ENCODE measurements at regions of chr1 and their contacts with region 1.

Region 1: DNA sequence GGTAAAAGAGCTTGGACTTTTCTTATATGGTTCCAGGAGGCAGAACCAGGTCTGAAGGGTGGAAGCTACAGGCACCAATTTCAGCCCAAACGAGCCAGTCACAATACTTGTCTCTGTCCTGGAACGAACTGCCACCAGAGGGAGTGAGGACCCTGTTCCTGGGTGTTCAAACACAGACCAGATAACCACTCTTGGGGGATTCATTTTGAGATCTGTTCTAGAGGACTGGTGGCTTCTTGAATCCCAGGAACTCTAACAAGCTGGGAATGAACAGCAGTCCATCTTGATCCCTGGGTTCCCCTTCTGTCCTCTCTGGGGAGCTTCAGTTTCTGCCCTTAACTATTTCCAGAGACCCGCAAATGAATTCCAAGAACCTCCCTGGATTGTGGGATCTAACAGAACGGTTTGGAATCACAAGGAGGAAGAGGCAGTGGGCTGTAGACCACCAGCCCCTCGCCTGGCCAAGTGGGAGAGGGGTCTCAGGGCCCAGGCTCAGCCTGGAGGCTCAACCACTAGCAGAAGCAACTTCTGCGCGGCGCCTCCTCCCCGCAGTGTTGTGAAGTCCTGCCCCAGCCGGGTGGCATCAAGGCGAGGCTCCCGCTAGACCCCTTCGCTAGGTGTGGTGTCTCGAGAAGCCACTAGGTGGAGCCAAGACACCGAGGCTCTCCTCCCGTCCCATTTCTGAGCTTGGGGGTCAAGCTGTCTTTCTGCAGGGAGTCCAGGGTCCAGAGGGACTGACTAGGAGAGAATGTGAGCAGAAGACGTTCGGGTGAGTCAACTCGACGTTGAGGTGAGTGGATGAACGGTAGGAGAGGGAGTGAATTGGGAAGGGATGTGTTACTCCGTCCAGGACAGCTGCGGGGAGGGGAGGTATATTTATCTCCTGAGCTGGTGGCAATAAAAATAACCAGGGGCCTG is 12.1 kb upstream of the NES start:
- DNase-seq: peak; percentile 62 to 88 (median 71)
- ATAC-seq: peak; percentile 99
- H3K4me3 ChIP-seq: no peak overlapping the region
- H3K4me3 Mint-ChIP-seq: no peak overlapping the region
- H3K27ac ChIP-seq: no peak overlapping the region
- H3K27ac Mint-ChIP-seq: no peak overlapping the region
- H3K4me1 ChIP-seq: peaks cover 28% of the 10 kb centered on the region
- H3K4me1 Mint-ChIP-seq: peaks cover 31% of the 10 kb centered on the region
- H3K27me3 ChIP-seq: peaks cover 49 to 57% of the 10 kb centered on the region in 2 experiments
- H3K27me3 Mint-ChIP-seq: peaks cover 61% of the 10 kb centered on the region
- CTCF ChIP-seq: peak; percentile 95

Region 2: DNA sequence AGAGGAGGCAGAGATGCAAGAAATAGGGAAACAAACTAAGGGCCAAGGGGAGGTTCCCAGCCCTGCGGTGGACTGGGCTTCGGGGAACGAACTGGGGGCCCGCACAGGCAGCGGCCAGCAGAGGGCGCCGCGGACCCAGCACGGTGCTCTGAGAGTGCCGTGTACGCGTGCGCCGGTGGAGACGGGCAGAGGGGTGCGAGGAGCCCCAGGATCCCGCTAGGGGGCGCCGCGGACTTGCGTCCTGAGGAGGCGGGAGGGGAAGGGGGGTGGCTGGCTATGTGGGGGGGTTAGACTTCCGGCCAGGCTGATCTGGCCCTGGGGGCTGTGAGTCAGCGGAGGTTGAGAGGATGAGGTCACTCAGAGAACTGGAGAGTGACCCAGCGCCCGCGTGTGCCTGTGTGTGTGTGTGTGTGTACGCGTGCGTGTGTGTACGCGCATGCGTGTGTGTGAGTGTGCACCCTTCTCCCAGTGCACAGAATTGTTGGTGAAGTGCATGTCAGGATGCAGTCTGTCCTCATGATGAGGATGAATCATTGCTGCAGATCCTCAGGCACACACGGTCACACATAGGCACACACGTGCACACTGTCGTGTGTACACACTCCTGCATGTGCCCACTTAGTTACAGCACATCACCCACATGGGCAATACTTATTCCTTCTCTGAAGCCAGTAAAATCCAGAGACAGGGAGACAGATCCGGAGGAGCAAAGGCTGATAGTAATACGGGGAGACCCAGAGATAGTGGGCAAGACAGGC is 29.1 kb before region 1 on chr1:
- CTCF ChIA-PET with region 1: interaction called, 11 read pairs
- POLR2A ChIA-PET with region 1: no interaction called
- intact Hi-C with region 1: no loop called
- DNase-seq: peak; percentile 79 to 96 (median 88)
- ATAC-seq: peak; percentile 87
- H3K4me3 ChIP-seq: no peak overlapping the region
- H3K4me3 Mint-ChIP-seq: peak overlapping the region; percentile 54
- H3K27ac ChIP-seq: no peak overlapping the region
- H3K27ac Mint-ChIP-seq: peak overlapping the region; percentile 42
- H3K4me1 ChIP-seq: peaks cover 60% of the 10 kb centered on the region
- H3K4me1 Mint-ChIP-seq: peaks cover 60% of the 10 kb centered on the region
- H3K27me3 ChIP-seq: peaks cover 20 to 22% of the 10 kb centered on the region in 2 experiments
- H3K27me3 Mint-ChIP-seq: peaks cover 30% of the 10 kb centered on the region
- CTCF ChIP-seq: peak; percentile 91

Region 3: GRCh38 chr1:156700736-156701531 is 11.6 kb after region 1 on chr1:
- CTCF ChIA-PET with region 1: interaction called, 51 read pairs
- POLR2A ChIA-PET with region 1: interaction called, 14 read pairs
- intact Hi-C with region 1: loop called (anchors 1 to 2 kb)
- DNase-seq: no peak
- ATAC-seq: peak; percentile 54
- H3K4me3 ChIP-seq: no peak overlapping the region
- H3K4me3 Mint-ChIP-seq: no peak overlapping the region
- H3K27ac ChIP-seq: no peak overlapping the region
- H3K27ac Mint-ChIP-seq: no peak overlapping the region
- H3K4me1 ChIP-seq: peaks cover 18% of the 10 kb centered on the region
- H3K4me1 Mint-ChIP-seq: peaks cover 18% of the 10 kb centered on the region
- H3K27me3 ChIP-seq: peaks cover 24 to 26% of the 10 kb centered on the region in 2 experiments
- H3K27me3 Mint-ChIP-seq: peaks cover 78% of the 10 kb centered on the region
- CTCF ChIP-seq: no peak

Region 4: GRCh38 chr1:156705918-156706656 is 16.8 kb after region 1 on chr1:
- CTCF ChIA-PET with region 1: interaction called, 51 read pairs
- POLR2A ChIA-PET with region 1: interaction called, 14 read pairs
- intact Hi-C with region 1: loop called (anchors 1 to 2 kb)
- DNase-seq: peak; percentile 60 to 86 (median 68)
- ATAC-seq: peak; percentile 75
- H3K4me3 ChIP-seq: peak overlapping the region; percentile 77
- H3K4me3 Mint-ChIP-seq: peak overlapping the region; percentile 97
- H3K27ac ChIP-seq: peak overlapping the region; percentile 53 to 66
- H3K27ac Mint-ChIP-seq: peak overlapping the region; percentile 77
- H3K4me1 ChIP-seq: peaks cover 35% of the 10 kb centered on the region
- H3K4me1 Mint-ChIP-seq: peaks cover 32% of the 10 kb centered on the region
- H3K27me3 ChIP-seq: peaks cover 22 to 24% of the 10 kb centered on the region in 2 experiments
- H3K27me3 Mint-ChIP-seq: peaks cover 39% of the 10 kb centered on the region
- CTCF ChIP-seq: peak; percentile 91

Region 5: DNA sequence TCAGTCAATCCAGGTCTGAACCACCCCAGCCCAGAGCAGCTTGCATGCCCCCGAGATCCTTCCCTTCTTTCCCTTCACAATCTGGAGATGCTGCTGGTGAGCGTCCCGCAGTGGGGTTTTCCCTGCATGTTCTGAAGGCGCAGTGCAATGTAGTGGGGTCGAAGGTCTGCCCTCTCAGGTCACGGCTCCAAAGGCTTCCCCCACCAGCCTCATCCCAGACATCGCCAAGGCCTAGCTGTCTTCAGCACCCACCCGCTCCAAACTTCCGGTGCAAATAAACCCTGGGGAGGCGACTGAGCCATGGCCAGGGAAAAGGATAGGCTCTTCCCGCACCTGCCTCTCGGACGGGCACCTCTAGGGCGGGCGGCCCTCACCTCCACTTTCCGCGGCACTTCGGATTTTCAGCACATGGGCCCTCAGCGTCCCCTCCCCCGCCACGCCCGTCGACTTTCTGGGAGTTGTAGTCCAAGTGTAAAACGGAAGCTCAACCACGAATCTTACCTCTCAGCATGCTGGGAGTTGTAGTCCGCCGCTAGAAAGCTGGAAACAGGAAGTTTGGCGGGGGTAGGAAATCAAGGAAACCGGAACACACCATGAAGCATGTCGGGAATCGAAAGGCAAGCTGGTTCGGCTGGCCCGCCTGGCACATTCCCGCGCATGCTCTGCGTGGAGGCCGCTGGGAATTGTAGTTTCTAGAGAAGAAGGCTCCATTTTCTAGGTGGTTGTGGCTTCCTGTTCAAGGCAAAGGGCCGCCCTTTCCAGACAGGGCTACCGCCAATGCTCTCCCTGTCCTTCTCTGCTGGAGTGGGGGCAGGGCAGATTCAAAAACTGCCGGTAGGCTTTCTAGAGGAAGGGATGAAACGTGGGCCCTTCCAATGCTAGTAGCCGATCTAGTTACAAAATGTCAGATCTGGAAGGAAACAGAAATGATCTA is 51.7 kb after region 1 on chr1 and contains the start of gene MRPL24:
- CTCF ChIA-PET with region 1: interaction called, 12 read pairs
- POLR2A ChIA-PET with region 1: interaction called, 3 read pairs
- intact Hi-C with region 1: no loop called
- DNase-seq: peak; percentile 92 to 100 (median 96)
- ATAC-seq: peak; percentile 89
- H3K4me3 ChIP-seq: peak within 1 kb of the TSS; percentile 74
- H3K4me3 Mint-ChIP-seq: peak within 1 kb of the TSS; percentile 94
- H3K27ac ChIP-seq: peak within 1 kb of the TSS; percentile 82 to 86
- H3K27ac Mint-ChIP-seq: peak within 1 kb of the TSS; percentile 89
- H3K4me1 ChIP-seq: peaks cover 28% of the 10 kb centered on the region
- H3K4me1 Mint-ChIP-seq: peaks cover 40% of the 10 kb centered on the region
- H3K27me3 ChIP-seq: no peaks in the 10 kb centered on the region
- H3K27me3 Mint-ChIP-seq: no peaks in the 10 kb centered on the region
- CTCF ChIP-seq: no peak
- total RNA-seq, gene MRPL24: 11.7 to 11.9 TPM

Region 6: DNA sequence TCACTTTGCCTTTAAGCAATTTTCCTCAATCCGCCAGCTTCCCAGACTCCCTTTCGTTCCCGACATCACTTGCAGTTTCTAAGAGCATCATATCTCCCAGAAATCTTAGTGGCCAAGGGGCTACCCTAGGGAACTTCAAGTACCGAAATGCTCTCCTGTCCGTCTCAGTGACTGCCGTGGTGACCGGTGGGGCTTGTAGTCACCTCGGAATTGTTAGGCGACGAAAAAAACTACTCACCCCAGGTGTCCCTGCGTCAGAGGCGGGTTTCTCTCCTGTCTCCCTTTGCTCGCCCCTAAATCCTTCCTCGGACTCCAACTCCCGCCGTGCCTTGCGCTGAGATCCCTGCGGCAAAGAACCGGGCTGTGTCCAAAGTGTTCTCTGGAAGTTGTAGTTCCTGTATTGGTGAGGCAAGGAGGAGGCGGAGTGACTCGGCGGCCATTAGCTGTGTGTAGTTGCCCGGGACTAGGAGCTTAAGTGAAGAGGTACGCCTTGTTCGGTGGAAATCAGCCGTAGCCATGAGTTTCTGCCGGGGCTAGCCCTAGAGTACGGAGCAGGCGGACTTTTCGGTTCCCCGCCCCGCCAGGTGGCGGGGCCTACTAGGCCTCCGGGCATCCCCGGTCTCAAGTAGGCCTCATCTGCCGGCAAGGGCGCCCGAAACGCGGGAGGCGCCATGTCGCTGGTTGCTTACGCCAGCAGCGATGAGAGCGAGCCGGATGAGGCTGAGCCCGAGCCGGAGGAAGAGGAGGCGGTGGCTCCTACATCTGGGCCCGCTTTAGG is 78.0 kb after region 1 on chr1 and contains the start of gene PRCC:
- CTCF ChIA-PET with region 1: interaction called, 7 read pairs
- POLR2A ChIA-PET with region 1: interaction called, 6 read pairs
- intact Hi-C with region 1: loop called in 1 of 2 experiments (anchors 5 kb)
- DNase-seq: peak; percentile 91 to 100 (median 96)
- ATAC-seq: peak; percentile 88
- H3K4me3 ChIP-seq: peak within 1 kb of the TSS; percentile 87
- H3K4me3 Mint-ChIP-seq: no peak within 1 kb of the TSS
- H3K27ac ChIP-seq: peak within 1 kb of the TSS; percentile 96
- H3K27ac Mint-ChIP-seq: no peak within 1 kb of the TSS
- H3K4me1 ChIP-seq: peaks cover 42% of the 10 kb centered on the region
- H3K4me1 Mint-ChIP-seq: peaks cover 37% of the 10 kb centered on the region
- H3K27me3 ChIP-seq: no peaks in the 10 kb centered on the region
- H3K27me3 Mint-ChIP-seq: no peaks in the 10 kb centered on the region
- CTCF ChIP-seq: no peak
- total RNA-seq, gene PRCC: 49.5 to 50.0 TPM

Region 7: GRCh38 chr1:156927215-156928042 is 238.1 kb after region 1 on chr1:
- CTCF ChIA-PET with region 1: interaction called, 6 read pairs
- POLR2A ChIA-PET with region 1: no interaction called
- intact Hi-C with region 1: loop called (anchors 2 to 10 kb)
- DNase-seq: peak; percentile 43 to 78 (median 58)
- ATAC-seq: peak; percentile 84
- H3K4me3 ChIP-seq: peak overlapping the region; percentile 9
- H3K4me3 Mint-ChIP-seq: no peak overlapping the region
- H3K27ac ChIP-seq: no peak overlapping the region
- H3K27ac Mint-ChIP-seq: no peak overlapping the region
- H3K4me1 ChIP-seq: peaks cover 24% of the 10 kb centered on the region
- H3K4me1 Mint-ChIP-seq: peaks cover 37% of the 10 kb centered on the region
- H3K27me3 ChIP-seq: peaks cover 57 to 81% of the 10 kb centered on the region in 2 experiments
- H3K27me3 Mint-ChIP-seq: peaks cover 94% of the 10 kb centered on the region
- CTCF ChIP-seq: peak; percentile 58

Measured in CD4-positive, alpha-beta T cell (primary cell).